GM13976 (cell line): ENCODE measurements at regions of chr12 and their contacts with region 1.

Region 1: DNA sequence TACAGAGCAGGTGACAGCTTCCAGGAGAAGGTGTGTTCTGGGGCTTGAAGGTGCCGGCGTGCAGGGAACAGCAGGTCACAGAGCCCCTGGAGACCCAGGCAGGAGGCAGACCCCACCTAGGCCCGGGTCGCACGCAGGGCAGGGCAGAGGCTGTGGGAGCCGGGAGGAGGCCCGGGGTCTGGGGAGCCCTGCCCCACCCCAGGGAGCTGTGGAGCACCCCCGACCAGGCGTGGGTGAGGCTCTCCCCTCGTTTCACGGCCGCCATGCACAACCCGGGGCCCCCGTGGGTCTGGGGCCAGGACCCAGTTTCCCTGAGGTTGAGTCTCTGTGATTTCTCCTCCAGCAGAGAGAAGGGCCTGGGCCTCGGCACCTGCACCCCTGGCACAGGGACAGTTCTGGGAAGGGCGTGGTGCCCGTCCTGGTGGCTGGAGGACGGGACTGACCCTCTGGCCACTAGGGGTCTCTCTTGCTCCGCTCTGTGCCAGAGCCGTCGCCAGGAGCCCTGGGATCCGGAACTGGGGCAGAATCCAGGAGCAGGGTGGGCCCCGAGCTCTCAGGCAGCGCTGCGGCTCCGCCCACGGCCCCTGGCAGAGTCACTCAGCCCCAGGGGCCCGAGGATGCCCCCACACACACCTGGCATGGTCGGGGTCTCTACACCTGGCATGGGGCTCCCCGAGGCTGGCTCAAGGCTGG is 75.2 kb upstream of the FBRSL1 start:
- DNase-seq: peak; percentile 94
- CTCF ChIP-seq: peak; percentile 88

Region 2: GRCh38 chr12:131783915-131784541 is 630.8 kb before region 1 on chr12:
- in situ Hi-C with region 1: no loop called
- DNase-seq: peak; percentile 57
- CTCF ChIP-seq: no peak

Region 3: GRCh38 chr12:131959641-131960589 is 454.9 kb before region 1 on chr12:
- in situ Hi-C with region 1: no loop called
- DNase-seq: no peak
- CTCF ChIP-seq: no peak

Region 4: GRCh38 chr12:132513070-132513398 is 98.3 kb after region 1 on chr12:
- in situ Hi-C with region 1: loop called (anchors 5 kb)
- DNase-seq: no peak
- CTCF ChIP-seq: no peak

Region 5: GRCh38 chr12:132614861-132615578 is 200.2 kb after region 1 on chr12:
- in situ Hi-C with region 1: loop called (anchors 25 kb)
- DNase-seq: peak; percentile 87
- CTCF ChIP-seq: peak; percentile 66